ENCODE measurements at regions of chrX and their contacts with region 1.

Region 1: GRCh38 chrX:40146262-40147125 is 48.7 kb upstream of the BCOR start:
- DNase-seq: no peak

Region 2: DNA sequence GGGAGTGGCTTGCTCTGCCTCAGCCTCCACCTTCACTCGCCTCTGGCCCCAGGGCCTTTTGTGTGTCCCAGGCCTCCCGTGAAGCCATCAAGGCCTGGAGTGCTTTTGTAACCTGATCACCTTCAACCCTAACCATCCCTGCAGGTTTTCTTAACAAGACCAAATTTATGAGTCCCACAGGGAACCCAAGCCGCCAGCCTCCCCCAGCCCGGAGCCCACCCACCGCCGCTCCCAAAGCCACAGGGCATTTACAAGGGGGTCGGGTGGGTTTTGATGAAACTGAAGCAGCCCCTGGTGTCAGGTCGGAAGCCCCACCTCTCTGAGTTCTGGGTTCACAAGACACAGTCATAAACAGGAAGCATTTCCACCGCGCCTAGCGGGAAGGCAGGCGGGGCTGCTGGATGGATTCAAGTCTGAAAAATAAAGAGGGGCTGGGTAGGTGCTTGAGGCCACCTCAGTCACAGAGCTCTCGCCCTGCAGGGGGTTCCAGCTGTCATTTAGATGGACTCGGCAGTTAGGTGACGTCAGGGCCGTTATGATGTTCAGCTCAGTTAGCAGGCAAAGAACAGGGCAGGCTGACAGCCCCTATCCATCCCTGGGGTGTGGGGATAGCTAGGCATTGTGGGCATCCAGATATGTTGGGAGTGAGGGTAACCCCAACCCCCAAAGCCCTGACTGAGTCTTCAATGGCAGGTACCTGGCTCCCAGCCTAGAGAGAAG is 177.2 kb before region 1 on chrX:
- CTCF ChIA-PET with region 1: no interaction called
- POLR2A ChIA-PET with region 1: no interaction called
- DNase-seq: peak; percentile 72

Region 3: GRCh38 chrX:40108959-40109287 is 37.6 kb before region 1 on chrX:
- CTCF ChIA-PET with region 1: interaction called, 4 read pairs
- POLR2A ChIA-PET with region 1: interaction called, 31 read pairs
- DNase-seq: peak; percentile 64

Region 4: DNA sequence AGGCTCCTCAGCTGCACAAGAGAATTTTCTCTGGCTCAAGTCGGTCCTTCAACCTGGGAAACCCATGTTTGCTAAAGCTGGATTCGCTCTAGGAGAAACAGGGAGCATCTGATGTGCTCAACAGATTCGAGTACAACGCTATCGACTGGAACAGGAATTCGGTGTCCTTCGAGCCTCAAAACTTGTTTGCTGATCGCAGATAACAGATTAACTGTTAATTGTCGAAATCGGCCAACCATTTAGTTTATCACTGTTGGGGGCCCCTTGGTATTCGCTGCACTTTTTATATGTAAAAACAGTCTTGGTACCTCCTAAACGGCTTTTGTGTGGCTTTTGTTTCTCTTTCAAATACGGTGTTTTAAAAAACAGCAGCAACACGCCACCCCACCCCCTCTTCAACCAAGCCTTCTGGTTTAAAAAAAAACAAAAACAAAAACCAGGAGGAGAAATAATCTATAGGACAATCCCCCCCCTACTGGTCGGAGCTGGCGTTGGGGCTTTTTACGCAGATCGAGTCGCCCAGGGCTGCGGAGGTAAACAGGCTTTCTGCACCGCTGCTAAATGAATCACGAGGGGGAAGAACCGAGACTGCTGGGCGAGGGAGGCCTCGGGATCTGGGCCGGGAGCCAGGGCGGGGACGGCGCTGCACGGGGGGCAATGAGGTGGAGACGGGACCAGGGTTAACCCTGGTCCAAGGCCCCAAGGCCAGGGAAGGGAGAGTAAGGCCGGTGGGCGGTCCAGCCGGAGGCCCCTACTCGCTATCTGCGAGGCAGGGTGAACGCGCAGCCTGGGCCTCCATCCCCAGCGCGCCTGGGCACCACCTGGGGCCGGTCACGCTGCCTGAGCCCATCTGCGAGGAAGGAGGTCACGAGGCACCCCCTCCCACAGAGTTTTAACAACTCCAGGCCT is 23.0 kb after region 1 on chrX:
- CTCF ChIA-PET with region 1: interaction called, 7 read pairs
- POLR2A ChIA-PET with region 1: interaction called, 21 read pairs
- DNase-seq: no peak